Naive thymus-derived CD8-positive, alpha-beta T cell (primary cell): ENCODE measurements at regions of chr6 and their contacts with region 1.

Region 1: DNA sequence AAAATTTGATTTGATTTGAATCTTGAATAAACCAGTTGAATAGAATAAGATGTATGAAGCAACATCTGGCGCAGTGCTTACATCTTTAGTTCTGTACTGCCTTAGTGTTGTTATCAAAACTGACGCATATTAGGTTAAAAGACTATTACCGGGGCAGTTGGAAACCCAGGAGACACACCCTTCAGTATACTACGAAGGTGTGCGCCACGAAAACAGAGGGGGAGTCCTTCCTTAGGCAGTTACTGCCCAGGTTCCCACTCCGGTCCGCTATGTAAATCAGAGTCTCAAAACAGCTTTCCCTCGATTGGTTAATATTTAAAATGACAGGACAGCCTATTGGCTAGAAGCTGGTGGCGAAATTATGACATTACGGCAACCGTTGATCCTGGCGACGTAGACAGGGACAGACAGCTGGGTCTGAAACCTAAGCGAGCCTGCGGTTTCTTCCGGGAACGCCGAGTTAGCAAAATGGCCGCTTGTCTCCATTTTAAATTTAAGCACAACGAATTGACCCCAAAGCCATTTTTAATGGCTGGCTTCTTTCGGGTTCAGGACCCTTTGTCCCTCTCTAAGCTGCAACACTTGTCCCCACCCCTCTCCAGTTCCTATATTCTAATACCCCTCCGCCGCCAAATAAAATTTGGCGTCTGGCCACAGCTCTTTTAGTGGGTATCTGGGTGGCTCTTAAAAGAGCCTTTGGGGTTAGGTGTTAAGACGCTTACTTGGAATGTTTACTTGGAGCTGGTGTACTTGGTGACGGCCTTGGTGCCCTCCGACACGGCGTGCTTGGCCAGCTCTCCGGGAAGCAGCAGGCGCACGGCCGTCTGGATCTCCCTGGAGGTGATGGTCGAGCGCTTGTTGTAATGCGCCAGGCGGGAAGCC is 35.8 kb downstream of the HFE start:
- DNase-seq: peak; percentile 76 to 99 (median 94)
- ATAC-seq: peak; percentile 59 to 63
- H3K4me3 Mint-ChIP-seq: peak overlapping the region; percentile 93 to 100 (median 98)
- H3K27ac Mint-ChIP-seq: peak overlapping the region; percentile 96 to 100 (median 98)
- H3K4me1 Mint-ChIP-seq: peaks cover 24 to 43% (median 33%) of the 10 kb centered on the region in 4 donors
- H3K27me3 Mint-ChIP-seq: peaks cover 0 to 4% (median 0%) of the 10 kb centered on the region in 5 donors

Region 2: GRCh38 chr6:25981568-25982263 is 141.3 kb before region 1 on chr6:
- POLR2A ChIA-PET with region 1: no interaction called
- DNase-seq: no peak
- ATAC-seq: no peak
- H3K4me3 Mint-ChIP-seq: no peak overlapping the region
- H3K27ac Mint-ChIP-seq: peak overlapping the region in 7 of 10 donors; percentile 4 to 72 (median 27)
- H3K4me1 Mint-ChIP-seq: peaks cover 2 to 7% (median 6%) of the 10 kb centered on the region in 4 donors
- H3K27me3 Mint-ChIP-seq: no peaks in the 10 kb centered on the region

Region 3: GRCh38 chr6:26031595-26032339 is 91.3 kb before region 1 on chr6:
- POLR2A ChIA-PET with region 1: interaction called, 77 read pairs
- DNase-seq: peak; percentile 71 to 96 (median 91)
- ATAC-seq: peak; percentile 67 to 71
- H3K4me3 Mint-ChIP-seq: peak overlapping the region; percentile 94 to 97 (median 95)
- H3K27ac Mint-ChIP-seq: peak overlapping the region; percentile 93 to 99 (median 96)
- H3K4me1 Mint-ChIP-seq: peaks cover 11 to 52% (median 41%) of the 10 kb centered on the region in 4 donors
- H3K27me3 Mint-ChIP-seq: peaks cover 0 to 2% (median 0%) of the 10 kb centered on the region in 5 donors

Region 4: DNA sequence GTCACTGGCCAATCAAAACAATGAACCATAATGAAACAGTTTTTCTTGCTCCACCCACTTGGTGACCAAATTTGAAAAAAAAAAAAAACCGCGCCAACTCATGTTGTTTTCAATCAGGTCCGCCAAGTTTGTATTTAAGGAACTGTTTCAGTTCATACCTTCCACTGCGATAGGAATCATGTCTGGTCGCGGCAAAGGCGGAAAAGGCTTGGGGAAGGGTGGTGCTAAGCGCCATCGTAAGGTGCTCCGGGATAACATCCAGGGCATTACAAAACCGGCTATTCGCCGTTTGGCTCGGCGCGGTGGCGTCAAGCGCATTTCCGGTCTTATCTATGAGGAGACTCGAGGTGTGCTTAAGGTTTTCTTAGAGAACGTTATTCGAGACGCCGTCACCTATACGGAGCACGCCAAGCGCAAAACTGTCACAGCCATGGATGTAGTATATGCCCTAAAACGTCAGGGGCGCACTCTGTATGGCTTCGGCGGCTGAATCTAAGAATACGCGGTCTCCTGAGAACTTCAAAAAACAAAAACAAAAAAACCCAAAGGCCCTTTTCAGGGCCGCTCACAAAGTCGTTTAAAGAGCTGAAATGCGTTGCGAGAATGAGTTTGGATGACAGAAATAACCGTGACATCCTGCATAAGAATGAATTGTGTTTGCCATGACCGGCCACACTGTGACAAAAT is 19.1 kb before region 1 on chr6:
- POLR2A ChIA-PET with region 1: interaction called, 302 read pairs
- DNase-seq: peak; percentile 71 to 97 (median 94)
- ATAC-seq: peak; percentile 91 to 92
- H3K4me3 Mint-ChIP-seq: peak overlapping the region; percentile 87 to 93 (median 89)
- H3K27ac Mint-ChIP-seq: peak overlapping the region; percentile 96 to 100 (median 98)
- H3K4me1 Mint-ChIP-seq: peaks cover 10 to 20% (median 14%) of the 10 kb centered on the region in 4 donors
- H3K27me3 Mint-ChIP-seq: peaks cover 0 to 4% (median 0%) of the 10 kb centered on the region in 5 donors

Region 5: GRCh38 chr6:26204332-26205165 is 81.5 kb after region 1 on chr6:
- POLR2A ChIA-PET with region 1: interaction called, 471 read pairs
- DNase-seq: peak; percentile 69 to 97 (median 88)
- ATAC-seq: peak; percentile 68 to 71
- H3K4me3 Mint-ChIP-seq: no peak overlapping the region
- H3K27ac Mint-ChIP-seq: no peak overlapping the region
- H3K4me1 Mint-ChIP-seq: peaks cover 14 to 36% (median 26%) of the 10 kb centered on the region in 4 donors
- H3K27me3 Mint-ChIP-seq: peaks cover 0 to 4% (median 0%) of the 10 kb centered on the region in 5 donors

Region 6: DNA sequence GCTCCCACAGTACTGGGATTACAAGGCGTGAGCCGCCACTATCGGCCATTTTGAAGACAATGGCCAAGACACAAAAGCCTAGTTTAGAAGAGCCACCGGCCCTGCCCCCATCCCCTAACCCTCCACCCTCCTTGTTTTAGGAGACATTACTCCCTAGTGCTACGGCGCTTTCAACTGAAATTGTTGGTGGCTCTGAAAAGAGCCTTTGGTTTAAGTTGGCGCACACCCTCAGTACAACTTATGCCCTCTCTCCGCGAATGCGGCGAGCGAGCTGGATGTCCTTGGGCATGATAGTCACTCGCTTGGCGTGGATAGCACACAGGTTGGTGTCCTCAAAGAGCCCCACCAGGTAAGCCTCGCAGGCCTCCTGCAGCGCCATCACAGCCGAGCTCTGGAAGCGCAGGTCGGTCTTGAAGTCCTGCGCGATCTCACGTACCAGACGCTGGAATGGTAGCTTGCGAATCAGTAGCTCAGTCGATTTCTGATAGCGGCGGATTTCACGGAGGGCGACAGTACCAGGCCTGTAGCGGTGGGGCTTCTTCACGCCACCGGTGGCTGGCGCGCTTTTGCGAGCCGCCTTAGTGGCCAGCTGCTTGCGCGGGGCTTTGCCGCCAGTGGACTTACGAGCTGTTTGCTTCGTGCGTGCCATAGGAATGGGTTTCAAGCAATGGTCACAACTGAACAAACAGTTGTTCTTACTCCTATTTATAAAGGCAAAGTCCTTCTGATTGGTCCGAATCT is 127.1 kb after region 1 on chr6:
- POLR2A ChIA-PET with region 1: interaction called, 26 read pairs
- DNase-seq: peak; percentile 52 to 90 (median 76)
- ATAC-seq: peak; percentile 74 to 82
- H3K4me3 Mint-ChIP-seq: peak overlapping the region; percentile 82 to 99 (median 95)
- H3K27ac Mint-ChIP-seq: peak overlapping the region; percentile 90 to 99 (median 96)
- H3K4me1 Mint-ChIP-seq: peaks cover 11 to 48% (median 42%) of the 10 kb centered on the region in 4 donors
- H3K27me3 Mint-ChIP-seq: no peaks in the 10 kb centered on the region

Region 7: DNA sequence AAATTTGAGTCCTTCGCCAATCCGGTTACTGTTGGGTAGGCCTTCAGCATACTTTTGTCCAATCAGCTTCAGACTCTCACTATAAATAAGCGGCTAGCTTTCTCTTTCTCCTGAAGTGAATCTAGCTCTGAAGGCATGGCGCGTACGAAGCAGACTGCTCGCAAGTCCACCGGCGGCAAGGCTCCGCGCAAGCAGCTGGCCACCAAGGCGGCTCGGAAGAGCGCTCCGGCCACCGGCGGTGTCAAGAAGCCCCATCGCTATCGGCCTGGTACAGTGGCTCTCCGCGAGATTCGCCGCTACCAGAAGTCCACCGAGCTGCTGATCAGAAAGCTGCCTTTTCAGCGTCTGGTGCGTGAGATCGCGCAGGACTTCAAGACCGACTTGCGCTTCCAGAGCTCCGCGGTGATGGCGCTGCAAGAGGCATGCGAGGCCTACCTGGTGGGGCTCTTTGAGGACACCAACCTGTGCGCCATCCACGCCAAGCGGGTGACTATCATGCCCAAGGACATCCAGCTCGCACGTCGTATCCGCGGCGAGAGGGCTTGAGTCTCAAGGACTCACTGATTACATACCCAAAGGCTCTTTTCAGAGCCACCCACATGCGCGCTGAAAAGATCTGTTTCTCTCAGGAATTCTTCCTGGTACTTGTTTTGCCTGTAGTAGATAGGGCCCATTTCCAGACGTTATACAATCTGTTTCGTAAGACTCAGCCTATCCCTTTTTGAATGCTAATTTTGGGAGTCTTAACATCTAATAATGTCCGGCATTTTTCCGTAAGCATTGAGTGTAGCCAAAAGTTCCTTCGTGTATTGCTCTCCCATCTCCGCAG is 1687.1 kb after region 1 on chr6:
- POLR2A ChIA-PET with region 1: interaction called, 45 read pairs
- DNase-seq: peak; percentile 58 to 95 (median 84)
- ATAC-seq: peak; percentile 63 to 65
- H3K4me3 Mint-ChIP-seq: peak overlapping the region; percentile 90 to 97 (median 96)
- H3K27ac Mint-ChIP-seq: peak overlapping the region; percentile 97 to 99 (median 98)
- H3K4me1 Mint-ChIP-seq: peaks cover 32 to 72% (median 47%) of the 10 kb centered on the region in 4 donors
- H3K27me3 Mint-ChIP-seq: no peaks in the 10 kb centered on the region